ENCODE measurements at regions of chr2 and their contacts with region 1.

Region 1: GRCh38 chr2:205925373-205926337 is 160.3 kb downstream of the INO80D start:
- DNase-seq: peak; percentile 79
- H3K4me3 ChIP-seq: peak overlapping the region; percentile 17
- H3K27ac ChIP-seq: no peak overlapping the region
- H3K4me1 ChIP-seq: peaks cover 5% of the 10 kb centered on the region
- H3K27me3 ChIP-seq: no peaks in the 10 kb centered on the region
- CTCF ChIP-seq: peak; percentile 95

Region 2: DNA sequence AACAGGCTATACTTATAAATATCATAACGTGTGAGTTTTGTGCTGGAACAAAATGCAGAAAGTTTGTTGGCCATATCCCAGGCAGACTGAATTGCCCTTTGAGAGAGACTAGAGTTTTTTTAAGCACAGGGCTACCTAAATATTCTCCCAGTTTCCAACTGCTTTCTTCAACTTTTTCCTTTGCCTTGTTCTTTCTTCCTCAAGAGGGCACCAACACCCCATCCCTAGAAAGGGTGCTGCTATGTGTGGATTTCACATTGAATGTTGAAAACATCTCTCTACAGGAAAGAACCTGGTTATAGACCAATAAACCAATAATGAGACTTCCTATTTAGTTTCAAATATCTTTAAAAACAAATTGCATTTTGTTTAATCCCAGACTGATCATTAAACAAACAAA is 1901.2 kb before region 1 on chr2:
- CTCF ChIA-PET with region 1: no interaction called
- POLR2A ChIA-PET with region 1: no interaction called
- intact Hi-C with region 1: loop called (anchors 10 kb)
- DNase-seq: peak; percentile 76
- H3K4me3 ChIP-seq: no peak overlapping the region
- H3K27ac ChIP-seq: no peak overlapping the region
- H3K4me1 ChIP-seq: peaks cover 21% of the 10 kb centered on the region
- H3K27me3 ChIP-seq: no peaks in the 10 kb centered on the region
- CTCF ChIP-seq: peak; percentile 76

Region 3: DNA sequence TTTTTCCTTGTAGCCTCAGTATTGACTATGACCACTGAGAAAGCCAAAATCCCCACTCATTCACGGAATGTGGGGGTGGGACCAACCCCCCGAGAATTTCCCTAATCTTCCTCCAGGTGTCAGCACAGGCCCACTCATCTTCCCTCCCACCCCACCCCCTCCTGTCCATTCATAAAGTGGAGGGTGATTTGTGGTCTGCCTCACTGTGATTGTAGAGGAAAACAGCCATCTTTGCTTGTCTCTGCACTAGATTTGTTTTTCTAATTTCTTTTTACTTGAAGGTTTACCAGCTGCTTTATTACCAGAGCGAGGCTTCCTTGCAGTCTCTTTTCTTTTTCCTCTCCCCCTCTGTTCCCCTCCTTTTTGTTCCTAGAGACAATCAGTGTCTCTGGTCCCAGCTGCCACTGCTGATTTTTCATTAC is 1817.3 kb before region 1 on chr2:
- CTCF ChIA-PET with region 1: no interaction called
- POLR2A ChIA-PET with region 1: no interaction called
- intact Hi-C with region 1: loop called (anchors 5 kb)
- DNase-seq: peak; percentile 68
- H3K4me3 ChIP-seq: no peak overlapping the region
- H3K27ac ChIP-seq: no peak overlapping the region
- H3K4me1 ChIP-seq: peaks cover 10% of the 10 kb centered on the region
- H3K27me3 ChIP-seq: no peaks in the 10 kb centered on the region
- CTCF ChIP-seq: peak; percentile 56

Region 4: GRCh38 chr2:205766779-205767359 is 158.8 kb before region 1 on chr2:
- CTCF ChIA-PET with region 1: interaction called, 3 read pairs
- POLR2A ChIA-PET with region 1: no interaction called
- intact Hi-C with region 1: loop called (anchors 2 kb)
- DNase-seq: peak; percentile 73
- H3K4me3 ChIP-seq: no peak overlapping the region
- H3K27ac ChIP-seq: no peak overlapping the region
- H3K4me1 ChIP-seq: peaks cover 17% of the 10 kb centered on the region
- H3K27me3 ChIP-seq: no peaks in the 10 kb centered on the region
- CTCF ChIP-seq: peak; percentile 88